ENCODE measurements at regions of chr13 and their contacts with region 1.

Region 1: GRCh38 chr13:67075239-67075638 is 154.9 kb downstream of the PCDH9 start:
- DNase-seq: no peak
- H3K4me3 Mint-ChIP-seq: no peak overlapping the region
- H3K27ac Mint-ChIP-seq: no peak overlapping the region
- H3K4me1 Mint-ChIP-seq: peaks cover 10% of the 10 kb centered on the region
- H3K27me3 Mint-ChIP-seq: no peaks in the 10 kb centered on the region
- CTCF ChIP-seq: no peak

Region 2: DNA sequence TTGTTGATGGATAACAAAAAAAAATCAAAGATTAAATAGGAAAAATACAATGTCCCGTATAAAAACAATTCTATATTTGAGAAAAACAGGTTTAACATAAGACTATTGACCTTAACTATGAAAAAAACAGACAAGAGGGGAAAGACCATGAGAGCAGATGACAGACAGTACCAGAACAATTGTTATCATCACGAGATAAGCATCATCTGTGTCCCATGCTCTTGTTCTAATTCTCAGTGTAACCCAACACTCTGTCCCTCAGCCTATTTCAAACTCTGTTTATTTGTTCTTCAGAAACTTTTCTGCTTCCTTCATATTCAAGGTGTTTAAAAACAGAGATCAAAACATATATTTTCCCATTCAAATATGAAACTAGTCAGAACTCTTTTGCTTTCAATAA is 61.5 kb before region 1 on chr13:
- CTCF ChIA-PET with region 1: no interaction called
- intact Hi-C with region 1: no loop called
- DNase-seq: no peak
- H3K4me3 Mint-ChIP-seq: no peak overlapping the region
- H3K27ac Mint-ChIP-seq: no peak overlapping the region
- H3K4me1 Mint-ChIP-seq: no peaks in the 10 kb centered on the region
- H3K27me3 Mint-ChIP-seq: no peaks in the 10 kb centered on the region
- CTCF ChIP-seq: no peak

Region 3: GRCh38 chr13:67216864-67217263 is 141.6 kb after region 1 on chr13:
- CTCF ChIA-PET with region 1: no interaction called
- intact Hi-C with region 1: loop called (anchors 10 kb)
- DNase-seq: no peak
- H3K4me3 Mint-ChIP-seq: no peak overlapping the region
- H3K27ac Mint-ChIP-seq: no peak overlapping the region
- H3K4me1 Mint-ChIP-seq: no peaks in the 10 kb centered on the region
- H3K27me3 Mint-ChIP-seq: no peaks in the 10 kb centered on the region
- CTCF ChIP-seq: no peak

Measured in Calu3 (cell line).